H1 (cell line): ENCODE measurements at regions of chr7 and their contacts with region 1.

Region 1: GRCh38 chr7:15323550-15323949 is 238.3 kb downstream of the AGMO start:
- DNase-seq: no peak
- H3K4me3 ChIP-seq: no peak overlapping the region
- H3K27ac ChIP-seq: no peak overlapping the region
- H3K4me1 ChIP-seq: no peaks in the 10 kb centered on the region
- H3K27me3 ChIP-seq: no peaks in the 10 kb centered on the region
- CTCF ChIP-seq: no peak
- EP300 ChIP-seq: no peak
- POLR2A ChIP-seq: no peak
- RAD21 ChIP-seq: no peak

Region 2: DNA sequence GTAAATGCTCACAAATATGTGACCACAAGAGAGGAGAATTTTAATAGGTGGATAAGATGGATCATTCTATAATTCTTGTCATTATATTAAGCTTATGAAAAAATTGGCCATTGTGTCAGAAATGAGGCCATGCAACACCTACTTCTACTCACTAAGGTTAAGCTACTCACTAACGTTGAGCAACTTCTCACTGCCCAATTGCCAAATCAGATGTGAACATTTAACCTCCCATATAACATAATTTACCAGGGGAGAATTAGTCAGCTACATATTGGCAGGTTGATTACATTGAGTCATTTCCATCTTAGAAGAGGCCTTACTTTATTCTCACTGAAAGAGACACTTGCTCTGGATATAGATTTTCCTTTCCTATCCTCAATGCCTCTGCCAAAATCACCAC is 209.8 kb before region 1 on chr7:
- CTCF ChIA-PET with region 1: no interaction called
- POLR2A ChIA-PET with region 1: no interaction called
- DNase-seq: no peak
- H3K4me3 ChIP-seq: no peak overlapping the region
- H3K27ac ChIP-seq: no peak overlapping the region
- H3K4me1 ChIP-seq: no peaks in the 10 kb centered on the region
- H3K27me3 ChIP-seq: no peaks in the 10 kb centered on the region
- CTCF ChIP-seq: no peak
- EP300 ChIP-seq: no peak
- POLR2A ChIP-seq: no peak
- RAD21 ChIP-seq: no peak

Region 3: GRCh38 chr7:15214976-15215375 is 108.6 kb before region 1 on chr7:
- CTCF ChIA-PET with region 1: no interaction called
- POLR2A ChIA-PET with region 1: no interaction called
- DNase-seq: no peak
- H3K4me3 ChIP-seq: no peak overlapping the region
- H3K27ac ChIP-seq: no peak overlapping the region
- H3K4me1 ChIP-seq: no peaks in the 10 kb centered on the region
- H3K27me3 ChIP-seq: no peaks in the 10 kb centered on the region
- CTCF ChIP-seq: no peak
- EP300 ChIP-seq: no peak
- POLR2A ChIP-seq: no peak
- RAD21 ChIP-seq: no peak

Region 4: DNA sequence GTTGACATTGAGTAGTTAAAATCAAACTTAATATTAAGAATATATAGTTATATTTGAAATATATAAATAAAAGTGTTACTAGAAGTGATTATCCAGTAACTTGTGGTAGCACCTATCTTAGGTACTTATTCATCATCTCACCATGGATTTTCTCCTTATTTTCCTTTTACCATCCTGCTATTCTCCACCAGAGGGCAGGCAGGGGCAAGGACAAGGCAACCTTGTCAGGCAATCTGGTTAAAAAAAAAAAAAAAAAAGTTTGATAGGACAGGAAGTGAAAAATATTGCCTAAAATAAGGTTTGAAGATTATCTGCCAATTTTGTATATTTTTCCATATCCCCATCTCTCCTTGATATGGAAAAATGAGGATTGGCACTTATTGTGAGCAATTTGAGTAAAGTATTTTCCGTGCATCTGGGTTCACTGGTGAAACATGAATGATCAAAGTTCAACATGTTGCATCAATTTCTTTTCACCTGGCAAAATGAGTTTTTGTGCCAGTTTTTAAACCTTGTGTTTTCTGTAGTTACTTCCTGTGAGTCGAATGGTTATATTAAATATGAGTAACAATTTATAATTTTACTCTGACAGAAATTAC is 18.4 kb before region 1 on chr7:
- CTCF ChIA-PET with region 1: interaction called, 14 read pairs
- POLR2A ChIA-PET with region 1: no interaction called
- DNase-seq: no peak
- H3K4me3 ChIP-seq: no peak overlapping the region
- H3K27ac ChIP-seq: no peak overlapping the region
- H3K4me1 ChIP-seq: no peaks in the 10 kb centered on the region
- H3K27me3 ChIP-seq: no peaks in the 10 kb centered on the region
- CTCF ChIP-seq: peak in 2 of 3 experiments; percentile 63 to 64; a peak in 3 of 4 replicates
- EP300 ChIP-seq: no peak
- POLR2A ChIP-seq: no peak
- RAD21 ChIP-seq: peak; percentile 82